Heart left ventricle (tissue), 16 donors: ENCODE measurements at regions of chr2 and their contacts with region 1.

Region 1: DNA sequence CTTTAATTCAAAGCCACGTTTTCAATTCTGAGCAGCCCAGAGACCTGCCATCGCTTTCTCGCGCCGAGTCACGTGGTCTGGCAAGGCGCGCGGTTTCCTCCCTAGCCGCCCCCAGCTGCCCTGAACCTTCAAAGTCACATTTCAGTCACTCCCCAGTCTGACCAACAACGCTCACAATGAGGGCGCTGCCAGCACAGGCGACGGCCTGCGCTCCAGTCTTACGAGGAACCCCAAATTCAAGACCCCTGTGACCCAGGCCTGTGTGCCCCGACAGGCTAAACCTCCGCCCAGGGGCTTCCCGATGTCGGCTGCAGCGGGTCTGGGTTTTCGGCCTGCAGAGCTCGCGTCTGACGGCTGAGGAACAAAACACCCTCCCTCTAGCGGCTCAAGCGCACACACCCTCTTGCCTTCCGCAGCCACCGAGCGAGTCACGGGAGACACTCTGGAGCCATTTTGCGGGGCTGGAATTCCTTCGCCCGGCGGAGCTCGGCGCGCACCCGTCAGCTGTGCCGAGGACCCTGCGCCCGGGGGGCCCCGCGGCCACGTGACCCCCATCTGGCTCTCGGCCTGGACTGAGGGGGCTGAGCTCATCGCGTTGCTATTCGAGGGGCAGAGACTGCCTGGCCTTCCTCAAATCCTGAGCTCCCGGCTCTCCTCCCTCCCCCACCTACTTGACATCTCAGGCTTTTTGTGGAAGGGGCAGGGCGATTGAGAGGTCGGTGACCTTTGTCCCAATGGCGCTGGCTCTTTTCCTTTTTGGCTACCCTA is 69.9 kb upstream of the ITGB6 start:
- DNase-seq: peak; percentile 92 to 96 (median 93)
- ATAC-seq: peak; percentile 89 to 91 (median 90)
- H3K4me3 ChIP-seq: peak overlapping the region; percentile 16 to 66 (median 52)
- H3K27ac ChIP-seq: peak overlapping the region; percentile 85 to 98 (median 96)
- H3K4me1 ChIP-seq: peaks cover 0 to 51% (median 26%) of the 10 kb centered on the region in 12 donors
- H3K27me3 ChIP-seq: no peaks in the 10 kb centered on the region
- CTCF ChIP-seq: peak; percentile 55 to 87 (median 70)
- POLR2A ChIP-seq: peak in 1 of 2 donors; percentile 57

Region 2: GRCh38 chr2:160109936-160110673 is 159.9 kb before region 1 on chr2:
- intact Hi-C with region 1: loop called in 5 of 10 experiments (anchors 1 to 10 kb)
- DNase-seq: peak; percentile 55 to 71 (median 62)
- ATAC-seq: peak; percentile 73 to 94 (median 86)
- H3K4me3 ChIP-seq: no peak overlapping the region
- H3K27ac ChIP-seq: no peak overlapping the region
- H3K4me1 ChIP-seq: no peaks in the 10 kb centered on the region
- H3K27me3 ChIP-seq: no peaks in the 10 kb centered on the region
- CTCF ChIP-seq: peak; percentile 54 to 90 (median 80)
- POLR2A ChIP-seq: no peak

Region 3: DNA sequence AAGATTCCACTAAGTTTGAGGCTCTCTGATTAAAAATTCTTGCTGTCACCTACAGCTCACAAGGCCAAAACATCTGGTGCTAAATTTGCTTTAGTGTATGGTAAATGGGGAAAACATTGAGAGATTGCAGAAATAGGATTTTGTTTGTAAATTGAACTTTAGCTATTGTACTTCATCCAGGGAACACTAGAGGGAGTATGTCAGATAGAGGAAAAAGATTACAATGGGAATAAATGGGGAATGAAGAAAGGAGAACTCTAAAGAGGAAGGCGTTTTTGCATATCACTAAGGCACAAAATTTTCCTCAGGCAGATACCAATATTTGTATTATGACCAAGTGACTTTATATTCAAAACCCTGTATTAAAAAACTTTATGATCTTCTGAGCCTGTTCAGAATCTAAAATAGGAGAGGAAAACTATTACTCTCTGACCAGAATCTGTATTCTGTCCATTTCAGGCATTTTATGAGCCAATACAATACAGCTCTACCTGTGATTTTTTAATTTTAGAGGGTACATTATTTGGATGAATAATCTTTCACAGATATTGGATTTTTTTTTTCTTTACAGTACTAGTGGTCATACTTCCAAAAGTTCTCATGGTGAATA is 17.6 kb before region 1 on chr2:
- intact Hi-C with region 1: loop called in 2 of 10 experiments (anchors 1 to 2 kb)
- DNase-seq: no peak
- ATAC-seq: peak in 2 of 4 donors; percentile 43 to 56
- H3K4me3 ChIP-seq: no peak overlapping the region
- H3K27ac ChIP-seq: peak overlapping the region in 11 of 12 donors; percentile 21 to 81 (median 63)
- H3K4me1 ChIP-seq: peaks cover 0 to 29% (median 8%) of the 10 kb centered on the region in 12 donors
- H3K27me3 ChIP-seq: no peaks in the 10 kb centered on the region
- CTCF ChIP-seq: peak; percentile 70 to 87 (median 76)
- POLR2A ChIP-seq: no peak

Region 4: DNA sequence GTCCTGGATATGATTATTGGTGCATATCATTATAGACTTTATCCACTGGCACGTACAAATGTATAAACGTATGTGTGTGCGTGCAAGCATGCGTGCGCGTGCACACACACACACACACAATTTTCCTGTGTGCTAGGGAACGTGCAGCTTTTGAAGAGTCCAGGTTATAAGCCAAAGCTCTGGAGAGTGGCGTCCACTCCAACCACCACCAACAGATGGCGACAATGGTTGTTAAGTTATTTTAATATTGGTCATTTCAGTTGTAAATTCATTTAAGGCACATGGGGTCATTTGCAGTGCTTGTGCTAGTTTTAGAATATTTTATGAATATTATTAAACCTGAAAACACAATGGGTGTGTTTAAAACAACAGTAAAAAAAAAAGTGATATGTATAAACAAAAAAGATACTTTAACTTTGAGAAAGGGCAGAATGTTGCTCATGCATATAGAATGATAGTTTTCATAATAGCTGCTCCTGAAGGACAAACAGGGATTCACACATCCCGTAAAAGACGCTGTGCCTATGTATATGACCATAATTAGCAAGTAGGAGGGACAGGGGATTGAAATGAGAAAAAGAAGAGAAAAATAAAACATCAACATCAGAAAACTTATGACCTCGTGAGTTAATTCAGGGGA is 54.3 kb after region 1 on chr2:
- intact Hi-C with region 1: no loop called
- DNase-seq: peak in 4 of 5 donors; percentile 51 to 56 (median 54)
- ATAC-seq: peak in 3 of 4 donors; percentile 33 to 54 (median 43)
- H3K4me3 ChIP-seq: no peak overlapping the region
- H3K27ac ChIP-seq: peak overlapping the region in 2 of 12 donors; percentile 32 to 46
- H3K4me1 ChIP-seq: peaks cover 0 to 96% (median 77%) of the 10 kb centered on the region in 12 donors
- H3K27me3 ChIP-seq: no peaks in the 10 kb centered on the region
- CTCF ChIP-seq: peak; percentile 39 to 87 (median 76)
- POLR2A ChIP-seq: no peak

Region 5: GRCh38 chr2:160406591-160407392 is 136.8 kb after region 1 on chr2:
- intact Hi-C with region 1: loop called in 1 of 10 experiments (anchors 10 kb)
- DNase-seq: peak; percentile 60 to 64 (median 61)
- ATAC-seq: peak; percentile 25 to 58 (median 38)
- H3K4me3 ChIP-seq: peak overlapping the region; percentile 81 to 96 (median 90)
- H3K27ac ChIP-seq: peak overlapping the region; percentile 89 to 99 (median 95)
- H3K4me1 ChIP-seq: peaks cover 8 to 81% (median 70%) of the 10 kb centered on the region in 12 donors
- H3K27me3 ChIP-seq: no peaks in the 10 kb centered on the region
- CTCF ChIP-seq: no peak
- POLR2A ChIP-seq: peak in 1 of 2 donors; percentile 34

Region 6: GRCh38 chr2:160994141-160995002 is 724.4 kb after region 1 on chr2:
- intact Hi-C with region 1: loop called in 1 of 10 experiments (anchors 5 kb)
- DNase-seq: peak in 4 of 5 donors; percentile 60 to 75 (median 66)
- ATAC-seq: peak; percentile 82 to 90 (median 88)
- H3K4me3 ChIP-seq: peak overlapping the region in 3 of 12 donors; percentile 1 to 22 (median 19)
- H3K27ac ChIP-seq: peak overlapping the region in 9 of 12 donors; percentile 20 to 75 (median 57)
- H3K4me1 ChIP-seq: peaks cover 0 to 16% (median 6%) of the 10 kb centered on the region in 12 donors
- H3K27me3 ChIP-seq: no peaks in the 10 kb centered on the region
- CTCF ChIP-seq: peak; percentile 78 to 93 (median 83)
- POLR2A ChIP-seq: no peak